Caco-2 (cell line): ENCODE measurements at regions of chr1 and their contacts with region 1.

Region 1: GRCh38 chr1:26853156-26853555 is 9.8 kb upstream of the SFN start:
- DNase-seq: peak; percentile 84 to 87
- H3K4me3 ChIP-seq: no peak overlapping the region
- H3K4me3 Mint-ChIP-seq: no peak overlapping the region
- H3K27ac Mint-ChIP-seq: no peak overlapping the region
- H3K4me1 ChIP-seq: no peaks in the 10 kb centered on the region
- H3K4me1 Mint-ChIP-seq: no peaks in the 10 kb centered on the region
- H3K27me3 ChIP-seq: no peaks in the 10 kb centered on the region
- H3K27me3 Mint-ChIP-seq: no peaks in the 10 kb centered on the region
- CTCF ChIP-seq: peak; percentile 54 to 72

Region 2: DNA sequence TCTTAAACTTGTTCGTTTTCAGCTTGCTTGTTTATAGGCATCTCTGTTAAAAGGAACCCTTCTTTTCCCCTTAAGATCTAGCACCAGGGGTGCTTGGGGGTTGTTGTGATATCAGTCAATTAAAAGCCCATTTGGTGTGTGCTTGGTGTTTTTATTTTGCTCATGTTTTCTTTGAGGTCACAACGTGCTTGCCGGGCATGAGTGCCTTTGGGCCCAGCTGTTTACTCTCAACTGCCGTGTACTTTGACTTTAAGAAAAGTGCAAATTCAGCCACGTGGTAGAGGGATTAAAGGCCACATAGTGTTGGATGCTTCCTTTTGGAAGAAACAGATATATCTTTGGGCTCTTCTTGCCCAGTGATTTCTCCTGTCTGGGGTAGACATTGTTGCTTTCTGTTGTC is 146.8 kb before region 1 on chr1:
- CTCF ChIA-PET with region 1: no interaction called
- POLR2A ChIA-PET with region 1: no interaction called
- intact Hi-C with region 1: no loop called
- DNase-seq: no peak
- H3K4me3 ChIP-seq: no peak overlapping the region
- H3K4me3 Mint-ChIP-seq: peak overlapping the region; percentile 39
- H3K27ac Mint-ChIP-seq: peak overlapping the region; percentile 68
- H3K4me1 ChIP-seq: peaks cover 58% of the 10 kb centered on the region
- H3K4me1 Mint-ChIP-seq: peaks cover 29% of the 10 kb centered on the region
- H3K27me3 ChIP-seq: no peaks in the 10 kb centered on the region
- H3K27me3 Mint-ChIP-seq: no peaks in the 10 kb centered on the region
- CTCF ChIP-seq: no peak

Region 3: GRCh38 chr1:26864610-26865527 is 11.7 kb after region 1 on chr1:
- CTCF ChIA-PET with region 1: interaction called, 3 read pairs
- POLR2A ChIA-PET with region 1: interaction called, 4 read pairs
- intact Hi-C with region 1: loop called (anchors 1 kb)
- DNase-seq: peak; percentile 95 to 97
- H3K4me3 ChIP-seq: peak overlapping the region; percentile 56
- H3K4me3 Mint-ChIP-seq: peak overlapping the region; percentile 82
- H3K27ac Mint-ChIP-seq: peak overlapping the region; percentile 94
- H3K4me1 ChIP-seq: 0 out of 2 replicates have a peak, but pooled peaks cover 7% of the 10 kb centered on the region
- H3K4me1 Mint-ChIP-seq: peaks cover 14% of the 10 kb centered on the region
- H3K27me3 ChIP-seq: no peaks in the 10 kb centered on the region
- H3K27me3 Mint-ChIP-seq: no peaks in the 10 kb centered on the region
- CTCF ChIP-seq: no peak

Region 4: DNA sequence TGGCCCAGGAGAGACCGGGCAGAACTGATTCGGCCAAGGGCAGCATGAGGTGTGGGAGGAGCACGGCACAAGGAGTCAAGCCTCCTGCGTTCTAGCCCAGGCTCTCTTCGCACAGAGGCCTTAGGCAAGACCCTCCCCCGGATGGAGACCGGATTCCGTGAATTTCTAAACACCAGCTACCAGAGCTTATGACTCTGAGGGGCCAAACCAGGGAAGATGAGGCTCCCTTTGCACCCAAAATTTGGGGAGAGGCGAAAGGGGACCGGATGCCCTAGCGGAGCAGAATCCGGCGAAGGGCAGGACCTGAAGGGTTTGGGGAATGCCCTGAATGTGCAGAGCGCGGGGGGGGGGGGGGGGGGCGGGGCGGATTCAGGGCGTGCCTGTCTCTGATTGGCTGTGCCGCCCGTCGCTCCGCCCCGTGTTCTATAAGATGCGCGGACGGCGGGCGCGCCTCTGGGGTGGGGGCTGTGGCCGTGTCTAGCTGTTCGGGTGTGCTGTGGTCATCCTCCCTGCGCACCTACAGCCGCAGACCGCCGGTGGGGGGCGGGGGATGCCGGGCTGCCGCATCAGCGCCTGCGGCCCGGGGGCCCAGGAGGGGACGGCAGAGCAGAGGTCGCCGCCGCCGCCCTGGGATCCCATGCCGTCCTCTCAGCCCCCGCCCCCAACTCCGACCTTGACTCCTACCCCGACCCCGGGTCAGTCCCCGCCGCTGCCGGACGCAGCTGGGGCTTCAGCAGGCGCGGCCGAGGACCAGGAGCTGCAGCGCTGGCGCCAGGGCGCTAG is 140.3 kb after region 1 on chr1 and contains the start of gene TRNP1:
- CTCF ChIA-PET with region 1: no interaction called
- POLR2A ChIA-PET with region 1: no interaction called
- intact Hi-C with region 1: no loop called
- DNase-seq: peak; percentile 91
- H3K4me3 ChIP-seq: peak within 1 kb of the TSS; percentile 83
- H3K4me3 Mint-ChIP-seq: peak within 1 kb of the TSS; percentile 76
- H3K27ac Mint-ChIP-seq: peak within 1 kb of the TSS; percentile 87
- H3K4me1 ChIP-seq: peaks cover 56% of the 10 kb centered on the region
- H3K4me1 Mint-ChIP-seq: peaks cover 17% of the 10 kb centered on the region
- H3K27me3 ChIP-seq: no peaks in the 10 kb centered on the region
- H3K27me3 Mint-ChIP-seq: no peaks in the 10 kb centered on the region
- CTCF ChIP-seq: no peak
- total RNA-seq, gene TRNP1: 23.3 and 23.6 TPM in 2 replicates